Left cardiac atrium (tissue), 4 donors: ENCODE measurements at regions of chr1 and their contacts with region 1.

Region 1: GRCh38 chr1:185813401-185813979 is 79.3 kb downstream of the HMCN1 start:
- DNase-seq: no peak
- ATAC-seq: no peak

Region 2: GRCh38 chr1:185566995-185567394 is 246.5 kb before region 1 on chr1:
- intact Hi-C with region 1: no loop called
- DNase-seq: no peak
- ATAC-seq: peak; percentile 38

Region 3: GRCh38 chr1:185636848-185637247 is 176.6 kb before region 1 on chr1:
- intact Hi-C with region 1: no loop called
- DNase-seq: no peak
- ATAC-seq: no peak

Region 4: DNA sequence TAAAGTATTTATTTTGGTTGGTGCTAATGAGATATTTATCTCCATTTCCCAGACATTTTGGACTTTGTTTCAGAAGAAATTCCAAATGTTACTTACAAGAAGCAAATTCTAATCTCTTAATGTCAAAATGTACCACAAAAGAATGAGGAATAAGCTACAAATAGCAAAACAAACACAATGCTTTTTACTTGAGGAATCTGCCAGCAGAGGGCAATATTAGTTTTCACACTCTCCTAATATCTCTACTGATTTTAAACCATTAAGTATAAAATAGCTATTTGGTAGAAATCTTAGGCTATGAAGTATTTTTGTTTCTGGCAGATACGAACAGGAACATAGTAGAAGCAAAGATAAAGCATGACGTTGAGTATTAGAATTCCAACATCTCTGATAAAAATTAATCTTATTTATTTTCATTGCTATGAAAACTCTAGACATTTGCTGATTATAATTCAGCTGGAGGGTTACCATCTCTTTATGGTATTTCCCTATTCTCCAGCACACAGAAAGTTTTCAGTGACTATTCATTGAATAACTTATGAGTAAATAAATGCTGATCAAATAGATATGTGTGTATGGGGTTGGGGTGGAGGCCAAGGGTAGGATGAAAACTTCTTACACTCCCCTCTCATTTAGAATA is 92.7 kb before region 1 on chr1:
- intact Hi-C with region 1: loop called in 1 of 2 experiments (anchors 5 kb)
- DNase-seq: no peak
- ATAC-seq: peak; percentile 68 to 73

Region 5: DNA sequence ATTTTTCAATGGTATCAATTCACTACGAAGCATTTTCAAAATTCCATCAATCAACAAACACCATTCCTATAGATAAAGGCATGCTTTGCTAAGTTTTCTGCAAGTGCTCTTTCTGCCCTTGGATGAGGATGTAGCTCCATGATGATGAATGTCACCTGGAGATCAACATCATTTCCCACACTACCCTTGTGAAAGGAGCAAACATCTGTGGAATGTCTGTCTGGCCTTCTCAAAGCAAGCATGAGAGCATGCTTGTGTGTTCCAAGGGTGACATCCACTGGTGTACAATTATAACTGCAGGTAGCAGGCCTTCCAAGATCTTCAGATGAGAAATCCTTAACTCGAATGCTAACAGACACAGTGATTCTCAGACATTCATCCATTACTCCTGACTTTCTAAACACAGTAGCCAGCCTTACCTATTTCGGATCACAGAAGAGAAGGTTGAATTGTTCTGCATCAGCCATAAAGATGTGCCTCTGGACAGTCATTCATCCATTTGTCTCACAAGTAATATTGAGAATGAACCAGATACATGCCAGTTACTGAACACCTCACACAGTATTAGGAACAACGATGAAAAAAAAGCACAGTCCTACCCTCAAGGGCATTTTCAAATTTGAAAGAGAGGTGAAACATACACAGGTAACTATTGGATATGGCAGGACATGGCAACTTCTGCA is 399.2 kb after region 1 on chr1:
- intact Hi-C with region 1: loop called (anchors 2 to 5 kb)
- DNase-seq: peak; percentile 28
- ATAC-seq: peak; percentile 90 to 98